Heart right ventricle (tissue), 16 donors: ENCODE measurements at regions of chr17 and their contacts with region 1.

Region 1: GRCh38 chr17:35496470-35497290 is 40.8 kb downstream of the SLFN12L start:
- DNase-seq: no peak
- ATAC-seq: no peak
- H3K4me3 ChIP-seq: peak overlapping the region in 4 of 10 donors; percentile 14 to 25 (median 20)
- H3K27ac ChIP-seq: no peak overlapping the region
- H3K4me1 ChIP-seq: peaks cover 0 to 21% (median 7%) of the 10 kb centered on the region in 9 donors
- H3K27me3 ChIP-seq: peaks cover 11 to 99% (median 94%) of the 10 kb centered on the region in 7 donors
- CTCF ChIP-seq: no peak

Region 2: DNA sequence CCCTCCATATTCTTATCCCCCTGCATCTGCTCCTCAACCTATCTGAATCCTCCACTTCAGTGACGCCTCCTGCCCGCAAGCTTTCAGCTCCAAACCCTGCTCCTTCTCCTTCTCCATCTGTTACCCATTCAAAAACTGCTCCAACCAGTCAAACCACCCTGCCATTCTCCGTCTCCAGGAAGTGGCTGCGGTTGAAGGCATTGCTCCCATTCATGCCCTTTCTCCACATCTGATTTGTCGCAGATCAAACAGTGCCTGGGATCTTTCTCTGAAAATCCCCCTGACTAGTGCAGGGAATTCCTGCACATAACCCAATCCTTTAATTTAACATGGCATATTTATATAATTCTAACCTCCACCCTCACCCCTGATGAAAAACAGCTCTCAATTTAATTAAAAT is 197.6 kb before region 1 on chr17:
- intact Hi-C with region 1: loop called in 1 of 10 experiments (anchors 5 kb)
- DNase-seq: no peak
- ATAC-seq: no peak
- H3K4me3 ChIP-seq: no peak overlapping the region
- H3K27ac ChIP-seq: no peak overlapping the region
- H3K4me1 ChIP-seq: no peaks in the 10 kb centered on the region
- H3K27me3 ChIP-seq: peaks cover 0 to 5% (median 0%) of the 10 kb centered on the region in 7 donors
- CTCF ChIP-seq: no peak

Region 3: GRCh38 chr17:35534576-35535093 is 38.0 kb after region 1 on chr17:
- intact Hi-C with region 1: no loop called
- DNase-seq: no peak
- ATAC-seq: no peak
- H3K4me3 ChIP-seq: peak overlapping the region in 1 of 10 donors; percentile 44
- H3K27ac ChIP-seq: peak overlapping the region in 1 of 10 donors; percentile 88
- H3K4me1 ChIP-seq: peaks cover 0 to 38% (median 30%) of the 10 kb centered on the region in 9 donors
- H3K27me3 ChIP-seq: no peaks in the 10 kb centered on the region
- CTCF ChIP-seq: no peak

Region 4: DNA sequence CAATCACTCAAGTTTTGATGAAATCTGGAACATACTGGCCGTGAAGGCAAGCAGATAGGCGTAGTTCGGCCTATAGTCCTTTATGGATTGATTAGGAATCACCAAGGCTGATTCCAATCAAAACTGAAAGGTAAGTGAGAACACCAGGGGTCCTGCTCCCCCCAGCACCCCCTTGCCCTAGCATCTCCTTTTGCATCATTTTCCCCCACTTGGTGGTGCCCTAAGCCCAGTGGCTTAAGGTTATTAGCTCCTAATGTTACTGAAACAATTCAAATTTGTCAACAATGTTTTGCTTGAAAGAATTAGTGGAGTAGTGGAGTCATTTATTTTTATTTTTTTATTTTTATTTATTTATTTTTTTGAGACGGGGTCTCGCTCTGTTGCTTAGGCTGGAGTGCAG is 59.0 kb after region 1 on chr17:
- intact Hi-C with region 1: loop called in 1 of 10 experiments (anchors 10 kb)
- DNase-seq: no peak
- ATAC-seq: no peak
- H3K4me3 ChIP-seq: no peak overlapping the region
- H3K27ac ChIP-seq: no peak overlapping the region
- H3K4me1 ChIP-seq: peaks cover 0 to 4% (median 0%) of the 10 kb centered on the region in 9 donors
- H3K27me3 ChIP-seq: peaks cover 0 to 41% (median 10%) of the 10 kb centered on the region in 7 donors
- CTCF ChIP-seq: peak in 4 of 9 donors; percentile 11 to 23 (median 18)